Body of pancreas (tissue), 4 donors: ENCODE measurements at regions of chr15 and their contacts with region 1.

Region 1: GRCh38 chr15:98421419-98422129 is 226.8 kb upstream of the IGF1R start:
- DNase-seq: peak; percentile 51 to 78 (median 66)
- ATAC-seq: peak; percentile 72
- H3K4me3 ChIP-seq: no peak overlapping the region
- H3K27ac ChIP-seq: no peak overlapping the region
- H3K4me1 ChIP-seq: peaks cover 10% of the 10 kb centered on the region
- H3K27me3 ChIP-seq: peaks cover 0 to 15% of the 10 kb centered on the region in 2 donors
- CTCF ChIP-seq: peak; percentile 91 to 99 (median 94)
- POLR2A ChIP-seq: no peak

Region 2: DNA sequence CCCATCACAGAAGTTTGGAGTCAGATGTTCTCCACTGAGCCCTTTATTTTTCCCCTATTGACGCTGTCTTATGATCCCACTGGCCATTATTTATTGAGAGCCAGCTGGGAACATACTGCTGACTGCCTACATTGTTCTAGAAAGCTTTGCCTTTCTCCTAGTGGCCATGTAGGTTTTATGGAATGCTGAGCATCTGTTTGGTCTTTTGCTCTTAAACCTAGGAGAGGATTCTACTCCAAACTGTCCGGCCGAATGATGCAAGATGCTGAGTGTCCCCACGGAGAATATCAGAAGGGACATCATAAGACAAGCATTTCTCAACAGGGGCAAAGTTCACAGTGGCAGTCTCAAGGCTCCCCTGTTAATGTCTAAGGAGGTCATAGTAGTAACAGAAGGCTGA is 289.6 kb before region 1 on chr15:
- intact Hi-C with region 1: no loop called
- DNase-seq: no peak
- ATAC-seq: no peak
- H3K4me3 ChIP-seq: no peak overlapping the region
- H3K27ac ChIP-seq: no peak overlapping the region
- H3K4me1 ChIP-seq: no peaks in the 10 kb centered on the region
- H3K27me3 ChIP-seq: no peaks in the 10 kb centered on the region
- CTCF ChIP-seq: no peak
- POLR2A ChIP-seq: no peak

Region 3: DNA sequence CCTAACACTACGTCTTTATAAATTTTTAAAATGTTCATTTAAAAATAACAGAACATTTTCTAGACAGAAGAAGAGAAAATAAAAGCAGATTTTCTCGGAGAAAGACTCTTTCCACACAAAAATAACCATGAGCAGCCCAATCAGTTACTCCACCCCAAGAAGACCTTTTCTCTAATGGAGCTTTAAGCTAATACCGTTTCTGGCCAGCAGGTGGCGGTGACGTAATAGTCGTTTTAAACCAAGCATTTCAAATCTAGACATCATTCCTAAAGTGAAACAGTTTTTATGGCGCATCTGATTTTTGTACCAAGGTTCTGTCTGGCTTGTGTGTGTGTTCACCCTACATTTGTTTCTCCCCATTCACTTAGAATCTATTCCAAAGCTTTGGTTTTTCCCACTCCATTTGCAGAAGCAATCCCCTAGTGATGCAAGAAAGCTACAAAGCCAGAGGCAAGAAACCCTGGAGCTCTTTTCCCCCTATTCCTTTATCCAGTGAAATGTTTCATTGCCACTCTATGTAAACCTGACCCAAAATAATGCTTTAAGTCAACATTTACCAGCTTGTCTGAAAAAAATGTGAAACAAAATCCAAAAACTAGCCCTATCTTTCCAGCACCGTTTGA is 109.9 kb before region 1 on chr15:
- intact Hi-C with region 1: loop called (anchors 5 kb)
- DNase-seq: peak; percentile 76 to 88 (median 84)
- ATAC-seq: peak; percentile 53
- H3K4me3 ChIP-seq: no peak overlapping the region
- H3K27ac ChIP-seq: no peak overlapping the region
- H3K4me1 ChIP-seq: no peaks in the 10 kb centered on the region
- H3K27me3 ChIP-seq: no peaks in the 10 kb centered on the region
- CTCF ChIP-seq: peak; percentile 58 to 79 (median 73)
- POLR2A ChIP-seq: no peak

Region 4: DNA sequence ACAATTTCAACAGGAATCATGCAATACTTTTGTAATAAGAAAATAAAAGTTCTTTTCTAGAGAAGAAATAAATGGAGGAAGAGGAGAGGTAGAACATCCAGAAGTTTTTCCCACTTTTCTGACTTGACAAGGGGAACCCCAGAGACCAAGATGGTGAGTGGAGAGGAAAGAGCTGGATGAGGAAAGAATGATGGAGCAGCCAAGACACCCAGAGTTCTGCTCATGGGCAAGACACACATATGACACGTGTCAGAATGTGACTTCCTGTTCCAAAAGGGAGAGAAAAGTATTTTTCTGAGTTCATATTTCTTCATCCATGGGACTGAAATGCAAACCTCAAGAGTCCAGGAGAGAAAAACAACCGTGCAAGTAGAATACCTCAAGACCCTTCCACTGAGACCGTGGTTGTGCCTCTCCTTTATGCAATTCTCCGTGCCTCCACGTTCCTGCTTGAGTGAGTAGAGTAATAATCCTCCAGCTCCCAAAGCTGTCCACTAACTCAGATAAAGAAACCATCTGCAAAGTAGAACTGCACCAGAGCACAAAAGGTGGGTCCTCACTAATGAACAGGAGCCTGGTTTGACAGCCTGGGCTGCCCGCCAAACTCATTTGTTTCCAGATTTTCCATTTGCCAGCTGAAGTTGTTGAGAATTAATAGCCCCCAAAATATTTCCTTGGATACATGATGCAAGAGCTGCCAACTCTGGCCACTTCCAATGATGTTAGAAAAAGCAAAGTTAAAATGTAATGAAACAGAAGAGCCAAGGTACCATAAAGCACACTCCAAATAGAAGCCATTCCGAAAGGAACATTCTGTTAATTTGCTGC is 45.8 kb before region 1 on chr15:
- intact Hi-C with region 1: no loop called
- DNase-seq: peak in 3 of 4 donors; percentile 9 to 24 (median 22)
- ATAC-seq: no peak
- H3K4me3 ChIP-seq: no peak overlapping the region
- H3K27ac ChIP-seq: no peak overlapping the region
- H3K4me1 ChIP-seq: no peaks in the 10 kb centered on the region
- H3K27me3 ChIP-seq: no peaks in the 10 kb centered on the region
- CTCF ChIP-seq: no peak
- POLR2A ChIP-seq: no peak